IMR-90 (cell line): ENCODE measurements at regions of chr7 and their contacts with region 1.

Region 1: DNA sequence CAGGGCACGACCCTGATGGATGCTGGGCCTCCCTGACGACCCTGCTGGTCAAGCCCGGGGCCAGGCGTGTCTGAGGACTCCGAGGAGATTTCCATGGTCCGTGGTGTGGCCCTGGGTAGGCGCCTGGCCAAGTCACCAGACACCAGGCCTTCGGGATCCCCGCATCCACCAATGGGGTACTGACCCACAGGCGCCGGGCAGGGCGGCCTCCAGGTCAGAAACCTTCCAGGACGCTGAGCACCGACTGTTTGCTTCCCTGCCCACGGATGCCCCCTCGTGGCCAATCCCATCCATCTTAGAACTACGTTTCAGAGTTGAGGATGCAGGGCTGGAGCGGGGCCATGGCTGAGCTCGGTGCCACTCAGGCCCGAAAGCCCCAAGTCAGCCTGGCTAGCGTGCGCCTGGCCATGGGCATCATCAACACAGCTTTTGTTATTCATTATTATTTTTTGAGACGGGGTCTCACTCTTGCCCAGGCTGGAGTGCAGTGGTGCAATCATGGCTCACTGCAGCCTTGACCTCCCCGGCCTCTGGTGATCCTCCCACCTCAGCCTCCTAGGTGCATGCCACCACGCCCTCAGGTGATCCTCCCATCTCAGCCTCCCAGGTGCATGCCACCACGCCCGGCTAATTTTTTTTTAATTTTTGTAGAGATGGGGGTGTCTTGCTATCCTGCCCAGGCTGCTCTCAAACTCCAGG is 7.1 kb upstream of the AMZ1 start:
- DNase-seq: peak; percentile 41
- ATAC-seq: peak; percentile 86
- H3K4me3 ChIP-seq: no peak overlapping the region
- H3K27ac ChIP-seq: no peak overlapping the region
- H3K4me1 ChIP-seq: no peaks in the 10 kb centered on the region
- H3K27me3 ChIP-seq: peaks cover 3% of the 10 kb centered on the region; the same call in 1 of the 2 replicates
- CTCF ChIP-seq: peak; percentile 70
- POLR2A ChIP-seq: no peak
- RAD21 ChIP-seq: peak; percentile 70

Region 2: GRCh38 chr7:2567679-2568278 is 113.2 kb before region 1 on chr7:
- CTCF ChIA-PET with region 1: interaction called, 3 read pairs
- POLR2A ChIA-PET with region 1: no interaction called
- dilution Hi-C with region 1: no loop called
- in situ Hi-C with region 1: no loop called
- intact Hi-C with region 1: loop called (anchors 1 kb)
- DNase-seq: peak; percentile 38
- ATAC-seq: peak; percentile 63
- H3K4me3 ChIP-seq: no peak overlapping the region
- H3K27ac ChIP-seq: no peak overlapping the region
- H3K4me1 ChIP-seq: peaks cover 9% of the 10 kb centered on the region
- H3K27me3 ChIP-seq: no peaks in the 10 kb centered on the region
- CTCF ChIP-seq: peak; percentile 56
- POLR2A ChIP-seq: no peak
- RAD21 ChIP-seq: peak; percentile 74

Region 3: GRCh38 chr7:2641406-2642393 is 39.2 kb before region 1 on chr7:
- CTCF ChIA-PET with region 1: no interaction called
- POLR2A ChIA-PET with region 1: no interaction called
- dilution Hi-C with region 1: no loop called
- in situ Hi-C with region 1: no loop called
- intact Hi-C with region 1: no loop called
- DNase-seq: peak; percentile 97
- ATAC-seq: peak; percentile 72
- H3K4me3 ChIP-seq: no peak overlapping the region
- H3K27ac ChIP-seq: peak overlapping the region; percentile 80
- H3K4me1 ChIP-seq: peaks cover 56% of the 10 kb centered on the region
- H3K27me3 ChIP-seq: no peaks in the 10 kb centered on the region
- CTCF ChIP-seq: no peak
- POLR2A ChIP-seq: peak; percentile 51
- RAD21 ChIP-seq: no peak

Region 4: DNA sequence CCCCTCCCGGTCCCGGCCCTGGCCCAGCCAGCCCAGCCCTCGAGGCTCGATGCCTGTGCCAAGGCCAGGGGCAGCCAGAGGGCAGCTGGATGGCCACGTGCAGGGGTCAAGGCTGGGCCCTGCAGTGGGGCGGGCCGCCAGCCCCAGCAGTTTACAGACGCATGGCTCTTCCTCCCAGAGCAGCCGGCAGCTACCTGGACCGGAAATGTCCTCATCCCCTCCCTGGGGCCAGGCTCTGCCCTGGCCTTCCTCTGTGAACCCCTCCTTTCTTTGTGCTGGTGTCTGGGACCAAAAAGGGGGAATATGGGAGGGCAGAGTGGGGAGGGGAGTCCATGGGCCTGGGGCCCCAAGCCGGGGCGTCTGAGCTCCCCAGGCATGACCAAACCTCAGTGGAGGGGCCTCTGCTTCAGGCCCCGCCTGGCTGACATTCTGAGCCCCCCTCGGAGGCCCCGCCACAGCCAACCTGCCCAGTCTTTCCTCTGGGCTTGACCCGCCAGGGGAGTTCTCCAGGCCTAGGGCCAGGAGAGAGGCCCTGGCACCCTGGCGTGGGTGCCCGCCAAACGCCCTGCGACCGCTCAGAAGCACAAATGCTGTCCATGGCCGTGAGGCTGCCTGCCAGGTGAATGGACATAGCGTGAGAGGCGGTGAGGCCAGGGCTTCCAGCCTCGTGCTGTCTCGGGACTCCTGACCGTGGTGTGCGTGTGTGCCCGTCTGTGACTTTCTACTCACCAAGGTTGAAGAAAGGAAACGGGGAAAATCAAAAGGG is 17.6 kb before region 1 on chr7:
- CTCF ChIA-PET with region 1: no interaction called
- POLR2A ChIA-PET with region 1: no interaction called
- dilution Hi-C with region 1: no loop called
- in situ Hi-C with region 1: no loop called
- intact Hi-C with region 1: no loop called
- DNase-seq: no peak
- ATAC-seq: no peak
- H3K4me3 ChIP-seq: no peak overlapping the region
- H3K27ac ChIP-seq: no peak overlapping the region
- H3K4me1 ChIP-seq: peaks cover 3% of the 10 kb centered on the region
- H3K27me3 ChIP-seq: no peaks in the 10 kb centered on the region
- CTCF ChIP-seq: no peak
- POLR2A ChIP-seq: no peak
- RAD21 ChIP-seq: no peak